Activated CD4-positive, alpha-beta memory T cell treated with anti-CD3 and anti-CD28 coated beads for 36 hours (primary cell): ENCODE measurements at regions of chr2 and their contacts with region 1.

Region 1: GRCh38 chr2:96174251-96175144 is 29.3 kb upstream of the DUSP2 start:
- DNase-seq: peak; percentile 91
- H3K4me3 Mint-ChIP-seq: peak overlapping the region; percentile 48
- H3K27ac Mint-ChIP-seq: peak overlapping the region; percentile 87
- H3K4me1 Mint-ChIP-seq: peaks cover 19% of the 10 kb centered on the region
- H3K27me3 Mint-ChIP-seq: peaks cover 2% of the 10 kb centered on the region

Region 2: GRCh38 chr2:96024336-96025193 is 149.9 kb before region 1 on chr2:
- CTCF ChIA-PET with region 1: interaction called, 30 read pairs
- POLR2A ChIA-PET with region 1: no interaction called
- intact Hi-C with region 1: no loop called
- DNase-seq: no peak
- H3K4me3 Mint-ChIP-seq: no peak overlapping the region
- H3K27ac Mint-ChIP-seq: no peak overlapping the region
- H3K4me1 Mint-ChIP-seq: peaks cover 2% of the 10 kb centered on the region
- H3K27me3 Mint-ChIP-seq: no peaks in the 10 kb centered on the region

Region 3: GRCh38 chr2:96131152-96131812 is 43.2 kb before region 1 on chr2:
- CTCF ChIA-PET with region 1: interaction called, 474 read pairs
- POLR2A ChIA-PET with region 1: interaction called, 3 read pairs
- intact Hi-C with region 1: no loop called
- DNase-seq: peak; percentile 78
- H3K4me3 Mint-ChIP-seq: peak overlapping the region; percentile 30
- H3K27ac Mint-ChIP-seq: peak overlapping the region; percentile 79
- H3K4me1 Mint-ChIP-seq: peaks cover 20% of the 10 kb centered on the region
- H3K27me3 Mint-ChIP-seq: no peaks in the 10 kb centered on the region

Region 4: GRCh38 chr2:96145036-96145847 is 29.3 kb before region 1 on chr2 and contains the start of gene DUSP2:
- CTCF ChIA-PET with region 1: interaction called, 474 read pairs
- POLR2A ChIA-PET with region 1: interaction called, 61 read pairs
- intact Hi-C with region 1: no loop called
- DNase-seq: peak; percentile 96
- H3K4me3 Mint-ChIP-seq: peak within 1 kb of the TSS; percentile 96
- H3K27ac Mint-ChIP-seq: peak within 1 kb of the TSS; percentile 100
- H3K4me1 Mint-ChIP-seq: peaks cover 57% of the 10 kb centered on the region
- H3K27me3 Mint-ChIP-seq: peaks cover 4% of the 10 kb centered on the region
- total RNA-seq, gene DUSP2: 522 to 539 TPM

Region 5: DNA sequence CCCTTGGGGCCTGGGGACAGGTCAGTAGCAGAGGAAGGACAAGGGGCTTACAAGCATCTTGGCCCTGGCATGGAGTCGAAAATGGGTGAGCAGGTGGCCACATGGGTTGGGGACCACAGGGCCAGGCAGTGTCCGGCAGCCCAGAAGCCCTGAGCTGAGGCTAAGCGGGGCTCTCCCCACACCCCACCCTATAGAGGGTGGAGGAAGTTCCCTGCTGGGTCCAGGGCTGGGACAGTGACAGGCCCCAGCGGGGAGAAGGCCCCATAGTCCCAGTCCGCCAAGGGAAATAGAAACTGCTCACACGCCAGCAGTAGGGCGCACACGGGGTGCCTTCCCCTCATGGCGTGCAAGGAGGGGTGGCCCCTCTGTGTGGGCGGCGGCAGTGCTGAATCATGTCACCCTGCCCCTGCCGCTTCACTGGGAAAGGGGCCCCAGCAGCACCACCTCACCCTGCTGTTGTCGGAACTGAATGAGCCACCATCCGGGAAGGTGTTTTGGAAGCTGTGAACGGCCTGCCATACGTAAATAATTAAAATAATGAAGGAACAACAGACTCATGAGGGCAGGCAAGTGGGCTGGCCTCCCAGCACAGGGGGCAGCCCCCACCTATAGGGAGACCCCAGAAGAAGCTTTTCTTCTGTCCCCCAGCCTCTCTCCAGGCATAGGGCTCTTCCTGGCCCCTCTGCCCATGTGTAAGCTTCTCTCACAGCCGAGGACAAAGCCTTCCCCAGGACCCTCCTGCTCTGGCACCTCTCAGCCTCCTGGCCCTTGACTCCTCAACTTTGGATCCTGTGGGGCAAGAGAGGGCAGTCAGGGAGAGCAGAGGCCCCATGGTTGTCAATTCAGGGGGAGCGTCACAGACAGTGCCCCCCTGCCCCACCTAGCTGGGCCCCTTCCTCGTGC is 16.6 kb before region 1 on chr2:
- CTCF ChIA-PET with region 1: interaction called, 39 read pairs
- POLR2A ChIA-PET with region 1: interaction called, 4 read pairs
- intact Hi-C with region 1: no loop called
- DNase-seq: peak; percentile 99
- H3K4me3 Mint-ChIP-seq: peak overlapping the region; percentile 62
- H3K27ac Mint-ChIP-seq: peak overlapping the region; percentile 96
- H3K4me1 Mint-ChIP-seq: peaks cover 82% of the 10 kb centered on the region
- H3K27me3 Mint-ChIP-seq: no peaks in the 10 kb centered on the region

Region 6: DNA sequence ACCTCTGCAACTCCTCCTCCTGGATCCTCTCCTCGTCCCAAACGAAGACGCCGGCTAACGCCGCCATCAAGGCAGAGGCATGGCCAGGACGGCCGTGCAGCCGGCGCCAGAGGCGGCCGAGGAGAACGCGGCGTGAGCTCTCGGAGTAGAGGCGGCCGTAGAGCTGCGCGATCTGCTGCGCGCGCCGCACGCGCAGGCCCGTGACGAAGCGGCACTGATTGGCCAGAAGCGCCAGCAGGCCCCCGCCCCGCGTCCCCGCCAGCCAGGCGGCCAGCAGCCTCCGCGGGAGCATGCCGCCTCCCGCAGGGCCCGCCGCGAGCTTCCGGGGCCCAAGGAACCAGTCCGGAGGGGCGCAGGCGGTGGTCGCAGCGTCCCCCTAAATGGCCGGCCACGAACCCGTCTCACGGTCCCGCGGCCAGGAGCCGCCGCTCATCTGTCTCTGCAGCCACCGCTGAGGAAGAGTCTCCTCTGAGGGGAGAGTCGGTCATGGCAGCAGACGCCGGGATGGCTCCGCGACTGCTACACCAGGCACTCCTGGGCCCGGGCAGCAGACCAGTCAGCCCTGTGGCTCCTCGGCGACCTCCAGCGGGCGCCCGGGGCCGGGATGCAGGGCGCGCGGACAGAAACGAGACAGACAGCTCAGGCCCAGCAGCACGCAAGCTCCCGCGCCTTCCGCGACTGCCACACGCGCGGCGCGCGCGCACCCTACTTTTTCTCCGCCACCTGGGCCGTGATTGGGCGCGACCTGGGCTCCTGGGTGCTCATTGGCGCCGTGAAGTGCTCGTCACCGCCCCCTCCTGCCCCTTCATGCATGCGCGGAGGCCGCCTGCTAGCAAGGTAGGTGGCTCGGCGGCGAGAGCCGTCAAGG is 33.9 kb after region 1 on chr2 and contains the start of gene STARD7:
- CTCF ChIA-PET with region 1: interaction called, 14 read pairs
- POLR2A ChIA-PET with region 1: interaction called, 10 read pairs
- intact Hi-C with region 1: no loop called
- DNase-seq: peak; percentile 99
- H3K4me3 Mint-ChIP-seq: peak within 1 kb of the TSS; percentile 98
- H3K27ac Mint-ChIP-seq: peak within 1 kb of the TSS; percentile 92
- H3K4me1 Mint-ChIP-seq: peaks cover 53% of the 10 kb centered on the region
- H3K27me3 Mint-ChIP-seq: no peaks in the 10 kb centered on the region
- total RNA-seq, gene STARD7: 173 to 181 TPM

Region 7: DNA sequence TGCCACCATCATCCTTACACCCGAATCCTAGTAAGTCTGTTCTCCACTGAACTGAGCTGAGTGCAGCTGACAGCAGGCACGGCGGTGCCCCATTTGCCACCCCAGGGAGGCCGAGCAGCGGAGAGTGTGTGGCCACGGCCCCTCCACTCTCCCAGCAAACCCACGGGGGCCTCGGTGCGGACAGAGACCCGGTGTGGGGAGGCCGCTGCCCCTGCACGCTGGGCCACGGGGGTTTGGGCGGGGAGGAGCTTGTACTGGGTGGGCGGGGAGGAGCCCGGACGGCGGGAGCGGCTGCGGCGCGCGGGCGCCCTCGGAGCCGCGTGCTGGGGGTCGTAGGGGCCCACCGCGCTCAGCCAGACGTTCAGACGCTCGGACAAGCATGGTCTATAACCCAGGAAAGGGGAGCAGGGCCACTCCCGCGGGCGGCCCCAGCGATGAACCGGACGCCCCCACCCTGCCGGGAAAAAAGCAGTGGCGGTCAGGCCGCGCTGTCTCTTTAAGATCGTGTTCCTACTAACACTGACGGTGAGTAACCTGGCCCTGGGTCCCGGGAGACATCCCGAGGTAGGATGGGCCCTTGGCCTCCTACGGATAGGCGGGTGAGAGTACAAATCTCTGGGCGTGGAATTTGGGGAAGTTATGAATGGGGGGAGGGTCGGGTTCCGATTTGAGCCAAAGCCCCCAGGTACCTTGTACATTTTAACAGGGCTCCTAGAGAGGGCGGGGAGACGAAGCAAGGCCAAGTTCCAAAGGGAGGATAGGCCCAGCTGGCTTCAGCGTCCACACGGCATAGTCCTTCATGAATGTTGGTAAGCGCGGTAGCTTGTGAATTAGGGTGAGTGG is 150.8 kb after region 1 on chr2 and contains the start of gene ITPRIPL1:
- CTCF ChIA-PET with region 1: no interaction called
- POLR2A ChIA-PET with region 1: no interaction called
- intact Hi-C with region 1: no loop called
- DNase-seq: peak; percentile 56
- H3K4me3 Mint-ChIP-seq: peak within 1 kb of the TSS; percentile 88
- H3K27ac Mint-ChIP-seq: peak within 1 kb of the TSS; percentile 91
- H3K4me1 Mint-ChIP-seq: peaks cover 56% of the 10 kb centered on the region
- H3K27me3 Mint-ChIP-seq: no peaks in the 10 kb centered on the region
- total RNA-seq, gene ITPRIPL1: 30.2 TPM

Region 8: GRCh38 chr2:96344011-96344410 is 169.5 kb after region 1 on chr2:
- CTCF ChIA-PET with region 1: no interaction called
- POLR2A ChIA-PET with region 1: no interaction called
- intact Hi-C with region 1: no loop called
- DNase-seq: peak; percentile 77
- H3K4me3 Mint-ChIP-seq: no peak overlapping the region
- H3K27ac Mint-ChIP-seq: peak overlapping the region; percentile 87
- H3K4me1 Mint-ChIP-seq: peaks cover 67% of the 10 kb centered on the region
- H3K27me3 Mint-ChIP-seq: no peaks in the 10 kb centered on the region